Kidney (tissue), 22 donors: ENCODE measurements at regions of chr9 and their contacts with region 1.

Region 1: GRCh38 chr9:124708633-124709291 is 62.3 kb downstream of the NR6A1 start:
- DNase-seq: no peak
- H3K4me3 ChIP-seq: no peak overlapping the region
- H3K27ac ChIP-seq: no peak overlapping the region
- H3K4me1 ChIP-seq: no peaks in the 10 kb centered on the region
- H3K27me3 ChIP-seq: no peaks in the 10 kb centered on the region
- CTCF ChIP-seq: no peak

Region 2: DNA sequence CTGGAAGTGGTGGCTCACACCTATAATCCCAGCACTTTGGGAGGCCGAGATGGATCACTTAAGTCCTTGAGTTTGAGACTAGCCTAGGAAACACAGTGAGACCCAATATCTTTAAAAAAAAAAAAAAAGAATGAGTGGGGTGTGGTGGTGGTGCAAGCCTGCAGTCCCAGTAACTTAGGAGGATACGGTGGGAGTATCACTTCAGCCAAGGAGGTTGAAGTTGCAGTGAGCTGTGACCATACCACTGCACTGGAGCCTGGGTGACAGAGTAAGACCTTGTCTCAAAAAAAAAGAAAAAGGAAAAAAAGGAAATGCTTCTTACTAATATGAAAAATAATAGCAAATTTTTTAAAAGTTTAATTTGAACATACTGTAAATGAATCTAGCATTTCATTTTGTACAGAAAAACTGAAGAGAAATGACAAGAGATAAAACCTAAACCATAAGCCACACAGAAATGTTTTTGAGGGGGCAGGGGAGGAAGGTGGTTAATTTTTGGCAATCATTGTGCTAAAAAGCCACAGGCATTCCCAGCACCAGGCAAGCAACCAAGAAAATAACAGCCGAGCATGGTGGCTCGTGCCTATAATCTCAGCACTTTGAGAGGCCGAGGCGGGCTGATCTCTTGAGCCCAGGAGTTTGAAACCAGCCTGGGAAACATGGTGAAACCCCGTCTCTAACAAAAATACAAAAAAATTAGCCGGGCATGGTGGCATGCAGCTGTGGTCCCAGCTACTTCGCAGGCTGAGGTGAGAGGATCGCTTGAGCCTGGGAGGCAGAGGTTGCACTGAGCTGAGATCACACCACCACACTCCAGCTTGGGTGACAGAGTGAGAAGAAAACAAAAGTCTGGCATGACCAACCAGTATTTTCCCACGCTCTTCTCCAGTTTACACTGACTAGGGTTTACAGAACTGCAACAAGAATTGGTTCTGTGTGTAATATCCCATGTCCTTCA is 87.1 kb before region 1 on chr9:
- intact Hi-C with region 1: loop called (anchors 10 kb)
- DNase-seq: peak in 2 of 5 donors; percentile 36 to 50
- H3K4me3 ChIP-seq: no peak overlapping the region
- H3K27ac ChIP-seq: no peak overlapping the region
- H3K4me1 ChIP-seq: peaks cover 0 to 3% (median 2%) of the 10 kb centered on the region in 3 donors
- H3K27me3 ChIP-seq: no peaks in the 10 kb centered on the region
- CTCF ChIP-seq: no peak